ENCODE measurements at regions of chr5 and their contacts with region 1.

Region 1: DNA sequence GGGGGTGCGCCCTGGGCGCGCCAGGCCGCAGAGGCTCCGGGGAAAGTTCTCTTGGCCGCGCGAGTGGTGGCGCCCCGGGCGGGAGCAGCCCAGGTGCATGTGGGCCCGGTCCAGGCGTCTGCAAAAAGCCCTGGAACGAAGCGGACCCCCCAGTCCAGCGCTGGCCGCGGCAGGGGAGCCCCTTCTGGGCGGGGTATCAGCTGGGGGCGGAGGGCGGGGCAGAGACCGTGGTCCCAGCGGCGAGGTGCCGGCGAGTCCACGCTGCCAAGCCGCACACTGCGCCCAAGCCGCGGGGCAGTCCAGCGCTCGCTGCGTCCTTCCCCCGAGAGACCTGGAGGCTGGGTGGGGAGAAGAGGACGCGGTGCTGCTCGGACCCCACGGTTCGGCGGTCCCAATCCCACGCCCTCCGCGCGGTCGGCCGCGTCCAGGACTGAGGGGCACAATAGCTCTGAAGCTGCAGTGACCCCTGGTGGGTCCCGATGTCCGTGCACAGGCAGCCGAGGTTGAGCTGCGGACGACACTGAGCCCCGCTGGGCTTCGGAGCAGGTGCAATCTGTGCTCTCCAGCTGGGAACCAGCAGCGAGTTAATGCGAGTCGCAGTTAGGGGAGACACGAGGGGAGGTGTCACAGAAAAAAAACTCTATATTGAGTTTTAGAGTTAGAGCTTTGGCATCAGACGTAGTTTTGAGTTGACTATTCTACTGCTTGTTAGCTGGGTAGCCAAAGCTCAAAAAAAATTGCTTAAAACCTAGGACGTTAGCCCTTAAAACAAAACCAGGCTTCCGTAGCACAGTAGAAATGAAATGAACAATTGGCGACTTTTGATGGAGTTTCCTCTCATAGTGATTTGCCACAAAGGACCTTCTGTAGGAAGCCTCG is 1.1 kb upstream of the EPB41L4A start:
- DNase-seq: peak; percentile 59 to 63
- ATAC-seq: peak; percentile 88 to 89
- H3K4me3 ChIP-seq: peak overlapping the region; percentile 72 to 94 (median 74)
- H3K27ac ChIP-seq: peak overlapping the region; percentile 61 to 80 (median 75)
- H3K4me1 ChIP-seq: no peaks in the 10 kb centered on the region
- H3K27me3 ChIP-seq: peaks cover 17 to 32% (median 31%) of the 10 kb centered on the region in 3 donors
- CTCF ChIP-seq: peak; percentile 57 to 92 (median 86)
- POLR2A ChIP-seq: no peak

Region 2: DNA sequence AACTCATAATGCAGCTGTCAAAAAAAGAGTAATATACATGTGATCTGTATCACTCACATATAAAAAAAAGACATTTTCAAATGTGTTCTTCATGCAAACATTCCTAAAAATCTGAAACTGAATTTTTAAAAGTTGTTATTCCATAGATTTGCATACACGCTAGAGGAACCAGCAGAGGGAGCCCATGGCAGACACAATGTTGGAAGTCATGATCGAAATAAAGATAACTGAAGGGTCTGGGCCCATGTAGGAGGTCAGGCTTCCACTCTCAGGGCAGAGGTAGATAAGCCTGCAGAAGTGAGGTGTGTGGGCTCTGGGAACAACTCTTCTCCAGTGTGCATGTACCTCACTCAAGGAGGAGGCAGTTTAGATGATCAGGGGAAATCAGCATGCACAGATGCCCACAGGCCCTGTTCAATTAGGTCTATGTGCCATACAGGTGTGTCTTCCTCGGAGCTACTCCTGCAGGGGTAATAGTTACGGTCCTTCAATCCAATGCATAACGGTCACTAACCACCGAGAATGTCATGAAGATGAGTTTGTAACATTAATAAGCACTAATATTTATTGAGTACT is 209.7 kb before region 1 on chr5:
- in situ Hi-C with region 1: loop called (anchors 5 to 25 kb)
- intact Hi-C with region 1: loop called (anchors 1 kb)
- DNase-seq: no peak
- ATAC-seq: peak in 1 of 2 donors; percentile 52
- H3K4me3 ChIP-seq: no peak overlapping the region
- H3K27ac ChIP-seq: no peak overlapping the region
- H3K4me1 ChIP-seq: no peaks in the 10 kb centered on the region
- H3K27me3 ChIP-seq: no peaks in the 10 kb centered on the region
- CTCF ChIP-seq: peak; percentile 35 to 69 (median 57)
- POLR2A ChIP-seq: no peak

Region 3: GRCh38 chr5:112276983-112277382 is 143.2 kb before region 1 on chr5:
- in situ Hi-C with region 1: no loop called
- intact Hi-C with region 1: no loop called
- DNase-seq: no peak
- ATAC-seq: no peak
- H3K4me3 ChIP-seq: no peak overlapping the region
- H3K27ac ChIP-seq: no peak overlapping the region
- H3K4me1 ChIP-seq: no peaks in the 10 kb centered on the region
- H3K27me3 ChIP-seq: no peaks in the 10 kb centered on the region
- CTCF ChIP-seq: no peak
- POLR2A ChIP-seq: no peak

Region 4: GRCh38 chr5:112491257-112491656 is 71.0 kb after region 1 on chr5:
- in situ Hi-C with region 1: no loop called
- intact Hi-C with region 1: no loop called
- DNase-seq: no peak
- ATAC-seq: no peak
- H3K4me3 ChIP-seq: no peak overlapping the region
- H3K27ac ChIP-seq: no peak overlapping the region
- H3K4me1 ChIP-seq: no peaks in the 10 kb centered on the region
- H3K27me3 ChIP-seq: no peaks in the 10 kb centered on the region
- CTCF ChIP-seq: peak in 1 of 5 experiments; percentile 22
- POLR2A ChIP-seq: no peak

Region 5: DNA sequence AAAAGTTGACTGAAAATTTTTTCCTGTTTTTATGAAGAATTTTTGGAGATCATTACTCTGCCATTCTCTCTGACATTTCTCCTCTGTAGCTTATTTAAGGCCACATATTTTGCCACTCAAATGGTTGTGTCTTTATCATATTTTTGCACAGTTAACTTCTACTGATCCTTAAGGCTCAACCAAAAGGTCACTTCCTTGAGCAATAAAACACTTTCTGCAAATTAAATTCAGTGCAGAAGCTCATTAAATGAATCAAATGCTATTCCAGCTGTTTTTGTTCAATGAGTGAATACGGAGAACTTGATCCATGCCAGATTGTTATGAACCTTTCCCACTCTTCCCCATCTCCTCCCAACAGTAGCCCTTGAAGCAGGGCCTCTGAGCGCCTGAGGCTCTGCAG is 92.7 kb after region 1 on chr5:
- in situ Hi-C with region 1: no loop called
- intact Hi-C with region 1: no loop called
- DNase-seq: no peak
- ATAC-seq: no peak
- H3K4me3 ChIP-seq: no peak overlapping the region
- H3K27ac ChIP-seq: no peak overlapping the region
- H3K4me1 ChIP-seq: no peaks in the 10 kb centered on the region
- H3K27me3 ChIP-seq: no peaks in the 10 kb centered on the region
- CTCF ChIP-seq: no peak
- POLR2A ChIP-seq: no peak